Breast epithelium (tissue), 4 donors: ENCODE measurements at regions of chr3 and their contacts with region 1.

Region 1: GRCh38 chr3:18633020-18633419 is 207.9 kb upstream of the SATB1 start:
- DNase-seq: no peak
- H3K4me3 ChIP-seq: no peak overlapping the region
- H3K27ac ChIP-seq: no peak overlapping the region
- H3K4me1 ChIP-seq: no peaks in the 10 kb centered on the region
- H3K27me3 ChIP-seq: no peaks in the 10 kb centered on the region
- CTCF ChIP-seq: no peak
- POLR2A ChIP-seq: no peak

Region 2: GRCh38 chr3:18501679-18502343 is 131.2 kb before region 1 on chr3:
- intact Hi-C with region 1: no loop called
- DNase-seq: no peak
- H3K4me3 ChIP-seq: no peak overlapping the region
- H3K27ac ChIP-seq: no peak overlapping the region
- H3K4me1 ChIP-seq: no peaks in the 10 kb centered on the region
- H3K27me3 ChIP-seq: no peaks in the 10 kb centered on the region
- CTCF ChIP-seq: no peak
- POLR2A ChIP-seq: no peak

Region 3: GRCh38 chr3:18657858-18658820 is 25.1 kb after region 1 on chr3:
- intact Hi-C with region 1: no loop called
- DNase-seq: no peak
- H3K4me3 ChIP-seq: no peak overlapping the region
- H3K27ac ChIP-seq: no peak overlapping the region
- H3K4me1 ChIP-seq: no peaks in the 10 kb centered on the region
- H3K27me3 ChIP-seq: no peaks in the 10 kb centered on the region
- CTCF ChIP-seq: no peak
- POLR2A ChIP-seq: no peak

Region 4: GRCh38 chr3:19083808-19084207 is 450.8 kb after region 1 on chr3:
- intact Hi-C with region 1: loop called (anchors 5 kb)
- DNase-seq: no peak
- H3K4me3 ChIP-seq: no peak overlapping the region
- H3K27ac ChIP-seq: no peak overlapping the region
- H3K4me1 ChIP-seq: no peaks in the 10 kb centered on the region
- H3K27me3 ChIP-seq: no peaks in the 10 kb centered on the region
- CTCF ChIP-seq: no peak
- POLR2A ChIP-seq: no peak